Heart right ventricle (tissue), 16 donors: ENCODE measurements at regions of chr12 and their contacts with region 1.

Region 1: DNA sequence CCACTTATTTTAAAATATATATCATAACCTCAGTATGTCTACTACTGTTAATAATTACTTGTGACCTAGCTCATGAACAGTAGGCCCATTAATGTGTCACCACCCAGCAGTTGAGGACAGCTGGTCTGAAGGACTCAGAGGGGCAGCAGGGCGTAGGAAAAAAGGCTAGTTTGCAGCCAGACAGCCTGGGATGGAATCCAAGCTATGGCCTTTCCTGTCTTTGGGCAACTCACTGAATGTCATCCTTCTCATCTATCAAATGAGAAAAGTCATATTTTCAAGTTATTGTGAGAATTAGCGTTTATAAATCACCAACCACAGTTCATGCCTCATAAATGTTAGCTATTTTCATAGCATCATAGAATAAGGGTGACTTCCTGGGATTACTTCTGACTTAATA is 12.3 kb downstream of the DENND5B start:
- DNase-seq: no peak
- ATAC-seq: peak in 5 of 8 donors; percentile 44 to 77 (median 61)
- H3K4me3 ChIP-seq: no peak overlapping the region
- H3K27ac ChIP-seq: peak overlapping the region in 3 of 10 donors; percentile 4 to 41 (median 29)
- H3K4me1 ChIP-seq: peaks cover 0 to 49% (median 28%) of the 10 kb centered on the region in 9 donors
- H3K27me3 ChIP-seq: no peaks in the 10 kb centered on the region
- CTCF ChIP-seq: no peak

Region 2: DNA sequence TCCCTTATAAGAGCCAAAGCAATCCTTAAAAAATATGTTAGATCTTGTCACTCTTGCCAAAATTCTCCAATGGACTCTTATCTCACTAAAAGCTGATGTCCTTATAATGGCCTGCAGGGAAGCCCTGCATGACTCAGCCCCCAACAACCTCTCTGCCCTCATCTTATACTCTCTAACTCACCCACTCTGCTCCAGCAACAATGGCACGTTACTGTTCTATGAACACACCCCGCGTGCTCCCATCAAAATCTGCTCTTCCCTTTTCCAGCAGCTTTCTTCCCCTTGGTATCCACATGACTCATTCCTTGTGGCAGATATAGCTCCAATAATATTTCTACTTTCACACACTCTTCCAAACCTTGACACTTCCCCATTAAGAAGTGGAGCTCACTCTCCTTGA is 95.8 kb before region 1 on chr12:
- intact Hi-C with region 1: loop called in 2 of 10 experiments (anchors 10 kb)
- DNase-seq: no peak
- ATAC-seq: peak in 1 of 8 donors; percentile 50
- H3K4me3 ChIP-seq: no peak overlapping the region
- H3K27ac ChIP-seq: no peak overlapping the region
- H3K4me1 ChIP-seq: peaks cover 0 to 37% (median 7%) of the 10 kb centered on the region in 9 donors
- H3K27me3 ChIP-seq: no peaks in the 10 kb centered on the region
- CTCF ChIP-seq: no peak

Region 3: GRCh38 chr12:31599053-31599452 is 20.4 kb after region 1 on chr12:
- intact Hi-C with region 1: no loop called
- DNase-seq: no peak
- ATAC-seq: no peak
- H3K4me3 ChIP-seq: no peak overlapping the region
- H3K27ac ChIP-seq: no peak overlapping the region
- H3K4me1 ChIP-seq: no peaks in the 10 kb centered on the region
- H3K27me3 ChIP-seq: no peaks in the 10 kb centered on the region
- CTCF ChIP-seq: no peak